Stomach (tissue), 19 donors: ENCODE measurements at regions of chr17 and their contacts with region 1.

Region 1: GRCh38 chr17:81445642-81446503 is 50.6 kb downstream of the BAHCC1 start:
- DNase-seq: no peak
- H3K4me3 ChIP-seq: no peak overlapping the region
- H3K27ac ChIP-seq: no peak overlapping the region
- H3K4me1 ChIP-seq: peaks cover 3 to 13% (median 10%) of the 10 kb centered on the region in 4 donors
- H3K27me3 ChIP-seq: no peaks in the 10 kb centered on the region
- CTCF ChIP-seq: no peak
- EP300 ChIP-seq: no peak
- POLR2A ChIP-seq: no peak

Region 2: GRCh38 chr17:81256616-81257015 is 189.3 kb before region 1 on chr17:
- intact Hi-C with region 1: no loop called
- DNase-seq: no peak
- H3K4me3 ChIP-seq: no peak overlapping the region
- H3K27ac ChIP-seq: peak overlapping the region in 2 of 5 donors; percentile 72
- H3K4me1 ChIP-seq: peaks cover 11 to 30% (median 20%) of the 10 kb centered on the region in 4 donors
- H3K27me3 ChIP-seq: no peaks in the 10 kb centered on the region
- CTCF ChIP-seq: no peak
- EP300 ChIP-seq: no peak
- POLR2A ChIP-seq: no peak

Region 3: DNA sequence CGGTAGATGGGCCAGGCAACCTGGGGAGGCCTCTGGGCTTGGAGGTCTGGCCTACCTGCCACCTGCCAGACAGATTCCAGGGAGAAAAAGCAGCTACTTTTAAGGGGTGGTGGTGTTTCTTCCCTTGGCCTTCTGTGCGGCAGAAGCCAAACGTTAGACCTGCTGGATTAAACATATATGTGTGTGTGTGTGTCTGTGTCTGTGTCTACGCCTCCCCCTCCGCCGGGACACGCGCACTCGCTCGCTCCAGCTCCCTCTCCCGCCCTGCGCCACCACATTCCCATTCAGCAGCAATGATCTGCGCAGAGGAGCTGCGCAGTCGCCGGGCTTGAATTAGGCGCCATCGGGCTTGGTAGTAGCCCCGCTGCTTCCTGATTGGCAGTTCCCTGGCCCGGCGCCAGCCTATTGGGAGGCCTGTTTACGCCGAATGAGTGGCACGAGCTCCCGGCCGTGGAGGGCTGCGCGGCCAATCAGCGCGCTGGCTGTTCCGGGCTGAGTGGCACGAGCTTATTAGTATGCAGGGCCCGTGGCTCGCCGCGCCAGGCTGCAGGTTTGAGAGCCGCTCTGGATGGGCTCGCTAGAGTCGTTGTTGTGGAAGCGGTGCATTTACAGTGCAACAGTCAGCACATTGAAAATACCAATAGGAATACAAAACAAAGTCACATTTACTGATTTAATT is 50.8 kb before region 1 on chr17 and contains the start of gene BAHCC1:
- intact Hi-C with region 1: no loop called
- DNase-seq: peak; percentile 100
- H3K4me3 ChIP-seq: peak within 1 kb of the TSS; percentile 71 to 84 (median 80)
- H3K27ac ChIP-seq: peak within 1 kb of the TSS; percentile 92 to 99 (median 95)
- H3K4me1 ChIP-seq: peaks cover 26 to 65% (median 54%) of the 10 kb centered on the region in 4 donors
- H3K27me3 ChIP-seq: peaks cover 0 to 61% (median 25%) of the 10 kb centered on the region in 3 donors
- CTCF ChIP-seq: no peak
- EP300 ChIP-seq: no peak
- POLR2A ChIP-seq: peak in 2 of 4 donors; percentile 92
- total RNA-seq, gene BAHCC1: 8.6 to 56.2 (median 15.2) TPM

Region 4: DNA sequence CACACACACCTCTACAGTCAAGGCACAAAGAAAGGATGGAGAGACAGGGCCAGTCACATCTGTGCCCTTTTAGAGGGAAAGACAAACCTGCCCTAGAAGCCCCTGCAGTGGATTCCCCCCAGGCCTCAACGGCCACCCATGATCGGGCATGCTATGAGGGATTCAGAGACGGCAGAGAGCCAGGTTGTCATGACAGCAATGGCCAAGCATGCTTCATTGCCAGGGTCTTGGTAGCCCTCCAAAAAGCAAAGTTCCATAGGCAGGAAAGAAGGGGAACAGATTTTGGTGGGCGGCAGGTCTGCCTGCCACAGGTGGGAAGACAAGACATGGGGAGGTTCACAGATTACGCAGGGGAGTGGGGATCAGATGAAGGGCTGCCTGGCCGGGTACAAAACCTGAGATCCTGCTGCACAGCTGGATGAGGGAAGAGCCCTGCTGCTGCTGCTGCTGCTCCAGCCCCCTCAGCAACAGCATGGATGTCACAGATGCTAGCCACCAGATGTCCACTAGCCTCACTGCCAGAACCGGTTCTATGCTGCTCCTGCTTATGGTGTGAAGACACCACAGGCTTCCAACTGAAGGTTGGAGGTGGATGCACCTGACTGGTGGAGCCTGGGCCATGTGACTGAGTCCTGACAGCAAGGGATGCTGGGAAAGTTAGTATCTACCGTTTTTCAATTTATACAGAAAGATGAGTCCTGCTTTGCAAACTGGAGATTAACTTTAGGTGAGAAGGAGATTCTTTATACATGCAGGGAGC is 48.9 kb after region 1 on chr17:
- intact Hi-C with region 1: loop called (anchors 5 kb)
- DNase-seq: peak in 1 of 2 donors; percentile 66
- H3K4me3 ChIP-seq: no peak overlapping the region
- H3K27ac ChIP-seq: no peak overlapping the region
- H3K4me1 ChIP-seq: peaks cover 0 to 16% (median 5%) of the 10 kb centered on the region in 4 donors
- H3K27me3 ChIP-seq: peaks cover 0 to 28% (median 0%) of the 10 kb centered on the region in 3 donors
- CTCF ChIP-seq: no peak
- EP300 ChIP-seq: no peak
- POLR2A ChIP-seq: no peak